ENCODE measurements at regions of chr7 and their contacts with region 1.

Region 1: DNA sequence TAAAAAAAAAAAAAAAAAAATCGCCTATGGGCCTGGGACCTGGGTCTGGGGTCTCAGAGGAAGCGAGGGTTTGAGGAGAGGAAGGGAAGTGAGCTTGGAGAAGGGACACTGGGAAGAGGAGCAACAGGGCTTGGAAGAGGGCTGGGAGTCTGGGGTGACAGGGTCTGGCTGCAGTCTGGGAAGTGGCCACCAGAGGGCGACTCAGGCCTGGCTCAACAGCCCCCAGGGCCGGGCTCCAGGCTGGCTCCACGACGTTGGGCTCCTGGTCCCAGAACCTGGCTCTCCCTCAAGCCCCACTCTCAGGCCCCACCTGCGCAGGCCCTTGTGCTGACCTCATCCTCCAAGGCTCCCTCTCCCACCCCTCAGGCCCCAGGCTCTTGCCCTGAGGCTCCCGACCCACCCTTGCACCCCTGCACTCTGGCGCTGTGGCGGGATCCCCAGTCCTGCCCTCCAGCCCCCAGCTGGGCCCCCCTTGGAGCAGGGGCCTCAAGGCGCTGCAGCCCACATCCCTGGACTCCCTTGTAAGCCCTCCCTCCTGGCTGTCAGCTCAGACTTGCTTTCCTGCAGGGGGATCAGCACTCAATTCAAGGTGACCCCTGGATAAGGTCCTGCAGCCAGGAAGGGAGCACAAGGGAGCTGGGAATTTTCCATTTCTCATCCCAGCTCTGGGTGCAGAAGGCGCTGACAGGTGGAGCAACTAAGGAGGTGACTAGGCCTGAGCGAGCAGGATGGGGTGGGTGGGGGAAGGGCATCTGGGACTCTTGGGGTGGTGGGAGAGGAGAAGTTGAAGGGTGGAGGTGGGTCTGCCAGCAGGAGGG is 5.4 kb upstream of the SPACDR start:
- DNase-seq: peak; percentile 96
- H3K4me3 ChIP-seq: no peak overlapping the region
- H3K27ac ChIP-seq: peak overlapping the region; percentile 56 to 72 (median 65)
- H3K4me1 ChIP-seq: peaks cover 52 to 92% (median 80%) of the 10 kb centered on the region in 4 donors
- H3K27me3 ChIP-seq: no peaks in the 10 kb centered on the region
- CTCF ChIP-seq: peak; percentile 91 to 97 (median 92)
- EP300 ChIP-seq: no peak
- POLR2A ChIP-seq: no peak

Region 2: DNA sequence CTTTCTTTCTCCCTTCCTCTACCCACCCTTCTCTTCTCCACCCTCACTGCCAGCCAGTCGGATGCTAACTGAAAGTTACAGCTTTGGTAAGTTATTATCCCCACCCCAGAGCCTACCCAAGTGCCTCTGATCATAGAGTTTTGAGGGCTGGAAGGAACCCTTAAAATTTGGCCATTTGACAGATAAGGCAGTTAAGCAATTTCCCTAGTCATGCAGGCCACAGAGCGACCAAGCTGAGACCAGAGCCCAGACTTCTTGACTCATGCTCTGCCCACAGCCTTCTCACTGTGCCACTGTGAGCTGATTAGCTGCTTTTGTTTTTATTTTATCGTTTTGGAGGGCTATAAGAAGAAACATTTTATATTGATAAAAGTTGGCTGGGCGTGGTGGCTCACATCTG is 87.1 kb after region 1 on chr7:
- intact Hi-C with region 1: loop called (anchors 2 kb)
- DNase-seq: no peak
- H3K4me3 ChIP-seq: no peak overlapping the region
- H3K27ac ChIP-seq: no peak overlapping the region
- H3K4me1 ChIP-seq: peaks cover 0 to 13% (median 11%) of the 10 kb centered on the region in 4 donors
- H3K27me3 ChIP-seq: no peaks in the 10 kb centered on the region
- CTCF ChIP-seq: no peak
- EP300 ChIP-seq: no peak
- POLR2A ChIP-seq: no peak